Naive thymus-derived CD4-positive, alpha-beta T cell (primary cell): ENCODE measurements at regions of chr10 and their contacts with region 1.

Region 1: DNA sequence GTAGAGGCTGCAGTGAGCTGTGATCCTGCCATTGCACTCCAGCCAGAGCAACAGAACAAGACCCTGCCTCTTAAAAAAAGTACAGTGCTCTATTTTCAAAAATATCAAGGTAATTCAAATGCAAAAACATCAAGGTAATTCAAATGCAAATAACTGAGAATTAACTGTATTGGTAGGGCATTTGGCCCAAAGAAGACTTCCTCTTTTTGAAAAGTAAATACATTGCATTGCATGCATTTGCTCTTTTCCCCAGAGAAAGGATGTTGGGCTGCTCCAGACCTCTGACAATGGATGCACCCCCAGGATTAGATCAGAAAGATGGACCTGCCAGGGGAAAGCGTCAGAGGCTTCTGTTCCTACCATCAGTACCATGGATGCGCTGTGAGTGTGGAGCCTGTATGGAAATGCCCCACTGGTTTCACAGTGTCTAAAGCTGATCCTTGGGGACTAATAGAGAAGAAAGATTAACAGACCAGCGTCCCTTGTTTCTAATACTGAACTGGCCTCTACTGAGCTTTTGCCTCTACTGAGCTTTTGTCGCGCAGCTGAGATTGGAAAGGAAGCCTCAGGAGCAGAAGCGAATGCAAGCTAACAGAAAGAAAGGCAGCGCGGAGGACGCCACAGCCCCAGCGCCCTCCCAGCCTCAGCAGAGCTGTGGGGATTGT is 93.5 kb upstream of the LYZL2 start:
- DNase-seq: no peak
- ATAC-seq: no peak
- H3K4me3 ChIP-seq: no peak overlapping the region
- H3K4me3 Mint-ChIP-seq: no peak overlapping the region
- H3K27ac ChIP-seq: no peak overlapping the region
- H3K27ac Mint-ChIP-seq: no peak overlapping the region
- H3K4me1 ChIP-seq: no peaks in the 10 kb centered on the region
- H3K4me1 Mint-ChIP-seq: peaks cover 0 to 10% (median 0%) of the 10 kb centered on the region in 7 donors
- H3K27me3 ChIP-seq: no peaks in the 10 kb centered on the region
- H3K27me3 Mint-ChIP-seq: peaks cover 0 to 4% (median 0%) of the 10 kb centered on the region in 5 donors

Region 2: DNA sequence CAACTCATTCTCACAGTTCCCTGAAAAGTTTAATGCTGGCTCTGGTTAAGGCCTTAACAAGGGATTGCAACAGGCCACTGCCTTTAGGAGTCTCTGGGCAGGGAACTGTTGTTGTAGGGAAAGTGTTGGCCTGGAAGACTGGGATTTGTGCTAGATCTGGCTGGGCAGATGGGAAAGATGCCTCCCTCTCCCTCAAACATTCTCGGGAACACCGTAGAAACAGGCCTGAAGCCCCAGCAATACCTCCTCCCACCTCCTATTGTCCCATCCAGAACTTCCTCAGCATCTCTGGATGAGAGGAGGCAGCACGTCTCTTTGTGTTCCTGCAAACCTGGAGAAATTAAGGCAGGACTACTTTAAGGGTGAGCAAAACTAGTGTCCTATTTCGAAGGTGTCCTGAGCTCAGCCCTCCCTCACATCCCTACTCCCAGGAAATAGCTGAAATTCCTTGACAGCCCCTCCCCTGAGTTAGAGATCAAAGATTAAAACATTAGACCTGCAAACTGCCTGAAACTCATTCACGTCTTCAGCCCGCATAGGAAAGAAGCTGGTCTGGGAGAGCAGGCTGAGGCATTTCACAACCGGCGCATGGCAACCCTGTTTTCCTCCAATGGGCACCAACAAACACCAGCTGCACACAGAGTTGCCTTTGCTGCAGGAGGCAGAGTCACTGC is 300.0 kb before region 1 on chr10:
- CTCF ChIA-PET with region 1: no interaction called
- POLR2A ChIA-PET with region 1: no interaction called
- intact Hi-C with region 1: no loop called
- DNase-seq: no peak
- ATAC-seq: peak; percentile 60
- H3K4me3 ChIP-seq: no peak overlapping the region
- H3K4me3 Mint-ChIP-seq: no peak overlapping the region
- H3K27ac ChIP-seq: no peak overlapping the region
- H3K27ac Mint-ChIP-seq: no peak overlapping the region
- H3K4me1 ChIP-seq: peaks cover 9 to 15% of the 10 kb centered on the region in 2 donors
- H3K4me1 Mint-ChIP-seq: peaks cover 20 to 55% (median 22%) of the 10 kb centered on the region in 7 donors
- H3K27me3 ChIP-seq: no peaks in the 10 kb centered on the region
- H3K27me3 Mint-ChIP-seq: no peaks in the 10 kb centered on the region

Region 3: DNA sequence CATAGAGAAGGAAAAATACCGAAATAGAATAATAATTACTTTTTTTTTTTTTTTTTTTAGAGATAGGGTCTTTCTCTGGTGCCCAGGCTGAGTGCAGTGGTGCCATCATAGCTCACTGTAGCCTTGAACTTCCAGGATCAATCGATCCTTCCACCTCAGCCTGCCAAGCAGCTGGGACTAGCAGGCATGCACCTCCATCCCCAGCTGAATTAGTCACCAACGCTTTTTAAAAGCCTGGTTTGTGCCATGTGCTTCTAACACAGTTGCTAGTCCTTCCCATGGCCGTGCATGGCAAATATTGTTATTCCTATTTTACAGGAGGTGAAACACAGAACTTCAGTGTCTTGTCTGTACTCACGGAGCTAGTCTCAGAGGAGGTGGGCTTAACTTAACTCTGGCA is 116.8 kb before region 1 on chr10:
- CTCF ChIA-PET with region 1: no interaction called
- POLR2A ChIA-PET with region 1: no interaction called
- intact Hi-C with region 1: no loop called
- DNase-seq: no peak
- ATAC-seq: no peak
- H3K4me3 ChIP-seq: no peak overlapping the region
- H3K4me3 Mint-ChIP-seq: no peak overlapping the region
- H3K27ac ChIP-seq: no peak overlapping the region
- H3K27ac Mint-ChIP-seq: no peak overlapping the region
- H3K4me1 ChIP-seq: no peaks in the 10 kb centered on the region
- H3K4me1 Mint-ChIP-seq: peaks cover 0 to 3% (median 0%) of the 10 kb centered on the region in 7 donors
- H3K27me3 ChIP-seq: no peaks in the 10 kb centered on the region
- H3K27me3 Mint-ChIP-seq: peaks cover 14 to 37% (median 18%) of the 10 kb centered on the region in 5 donors

Region 4: DNA sequence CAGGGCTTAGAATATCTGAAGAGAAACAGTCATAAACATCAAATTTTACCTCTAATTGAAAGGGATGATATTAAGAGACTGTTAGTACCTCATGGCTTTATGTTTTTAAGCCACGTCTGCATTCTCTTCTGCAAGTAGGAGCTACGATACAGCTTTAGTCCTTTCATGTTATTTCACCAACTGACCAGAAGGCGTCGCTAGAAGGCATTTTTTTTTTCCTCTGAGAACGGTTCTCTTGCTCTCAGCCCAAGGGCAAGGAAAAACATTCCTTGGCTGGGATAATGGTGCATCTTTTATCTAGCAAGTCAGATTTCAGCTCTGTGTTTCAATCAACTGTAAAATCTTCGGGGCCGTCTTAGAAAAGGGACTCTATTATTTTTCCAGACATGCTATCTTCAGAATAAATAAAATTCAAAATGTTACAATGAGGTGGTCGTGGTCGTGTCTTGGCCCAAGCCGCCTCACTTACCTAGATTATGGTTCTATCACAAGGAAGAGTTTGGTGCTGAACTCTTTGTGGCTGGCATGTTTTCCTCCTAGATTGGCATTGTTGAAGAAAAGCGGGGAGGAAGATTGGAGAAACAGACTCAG is 52.0 kb before region 1 on chr10:
- CTCF ChIA-PET with region 1: interaction called, 19 read pairs
- POLR2A ChIA-PET with region 1: no interaction called
- intact Hi-C with region 1: loop called (anchors 1 kb)
- DNase-seq: peak in 6 of 9 donors; percentile 15 to 51 (median 40)
- ATAC-seq: peak; percentile 76
- H3K4me3 ChIP-seq: peak overlapping the region; percentile 40
- H3K4me3 Mint-ChIP-seq: peak overlapping the region in 9 of 10 donors; percentile 43 to 80 (median 74)
- H3K27ac ChIP-seq: no peak overlapping the region
- H3K27ac Mint-ChIP-seq: no peak overlapping the region
- H3K4me1 ChIP-seq: no peaks in the 10 kb centered on the region
- H3K4me1 Mint-ChIP-seq: peaks cover 0 to 13% (median 0%) of the 10 kb centered on the region in 7 donors
- H3K27me3 ChIP-seq: no peaks in the 10 kb centered on the region
- H3K27me3 Mint-ChIP-seq: peaks cover 0 to 23% (median 12%) of the 10 kb centered on the region in 5 donors

Region 5: GRCh38 chr10:30701451-30702173 is 21.5 kb before region 1 on chr10:
- CTCF ChIA-PET with region 1: interaction called, 13 read pairs
- POLR2A ChIA-PET with region 1: interaction called, 4 read pairs
- intact Hi-C with region 1: loop called in 1 of 2 experiments (anchors 1 kb)
- DNase-seq: peak in 8 of 9 donors; percentile 68 to 81 (median 74)
- ATAC-seq: peak; percentile 80
- H3K4me3 ChIP-seq: peak overlapping the region; percentile 31
- H3K4me3 Mint-ChIP-seq: peak overlapping the region; percentile 68 to 98 (median 88)
- H3K27ac ChIP-seq: peak overlapping the region; percentile 86
- H3K27ac Mint-ChIP-seq: peak overlapping the region; percentile 88 to 98 (median 96)
- H3K4me1 ChIP-seq: peaks cover 63 to 74% of the 10 kb centered on the region in 2 donors
- H3K4me1 Mint-ChIP-seq: peaks cover 51 to 97% (median 88%) of the 10 kb centered on the region in 7 donors
- H3K27me3 ChIP-seq: no peaks in the 10 kb centered on the region
- H3K27me3 Mint-ChIP-seq: no peaks in the 10 kb centered on the region

Region 6: DNA sequence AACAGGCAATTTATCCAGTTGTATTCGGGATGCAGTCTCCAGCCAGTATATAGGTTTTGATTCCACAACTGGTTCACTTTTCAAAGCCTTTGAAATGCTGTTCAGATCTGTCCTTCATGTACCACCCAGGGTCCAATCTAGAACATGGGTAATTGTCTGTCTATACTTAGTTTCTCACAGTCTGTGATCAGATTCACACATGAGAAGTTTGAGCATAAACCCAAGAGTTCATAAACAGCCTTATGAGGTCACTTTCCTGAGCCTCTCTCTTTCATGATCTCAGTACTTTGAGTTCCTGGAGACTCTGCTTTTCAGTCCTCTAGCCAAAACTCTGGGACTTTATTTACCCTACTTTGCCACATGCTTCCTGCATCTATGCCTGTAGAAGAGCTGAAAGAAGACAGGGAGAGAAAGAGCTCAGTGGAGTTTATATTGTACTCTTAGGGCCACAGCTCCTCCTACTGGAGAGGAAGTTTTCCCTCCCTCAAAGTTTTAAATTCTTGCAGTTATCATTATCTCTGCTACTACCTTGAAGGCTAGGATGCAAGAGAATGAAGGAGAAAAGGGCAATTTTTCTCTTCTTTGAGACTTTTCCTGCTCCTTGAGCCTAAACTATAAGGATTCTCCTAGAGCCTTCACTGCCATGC is 767.9 kb after region 1 on chr10:
- CTCF ChIA-PET with region 1: no interaction called
- POLR2A ChIA-PET with region 1: no interaction called
- intact Hi-C with region 1: loop called (anchors 1 to 2 kb)
- DNase-seq: peak in 6 of 9 donors; percentile 30 to 50 (median 36)
- ATAC-seq: peak; percentile 72
- H3K4me3 ChIP-seq: no peak overlapping the region
- H3K4me3 Mint-ChIP-seq: no peak overlapping the region
- H3K27ac ChIP-seq: no peak overlapping the region
- H3K27ac Mint-ChIP-seq: peak overlapping the region in 1 of 9 donors; percentile 1
- H3K4me1 ChIP-seq: no peaks in the 10 kb centered on the region
- H3K4me1 Mint-ChIP-seq: peaks cover 0 to 12% (median 0%) of the 10 kb centered on the region in 7 donors
- H3K27me3 ChIP-seq: no peaks in the 10 kb centered on the region
- H3K27me3 Mint-ChIP-seq: no peaks in the 10 kb centered on the region

Region 7: GRCh38 chr10:31808258-31809218 is 1085.5 kb after region 1 on chr10:
- CTCF ChIA-PET with region 1: no interaction called
- POLR2A ChIA-PET with region 1: no interaction called
- intact Hi-C with region 1: loop called (anchors 1 kb)
- DNase-seq: peak in 8 of 9 donors; percentile 21 to 62 (median 48)
- ATAC-seq: peak; percentile 77
- H3K4me3 ChIP-seq: no peak overlapping the region
- H3K4me3 Mint-ChIP-seq: peak overlapping the region in 3 of 10 donors; percentile 51 to 78 (median 56)
- H3K27ac ChIP-seq: no peak overlapping the region
- H3K27ac Mint-ChIP-seq: peak overlapping the region in 8 of 9 donors; percentile 17 to 94 (median 71)
- H3K4me1 ChIP-seq: no peaks in the 10 kb centered on the region
- H3K4me1 Mint-ChIP-seq: peaks cover 2 to 11% (median 6%) of the 10 kb centered on the region in 7 donors
- H3K27me3 ChIP-seq: no peaks in the 10 kb centered on the region
- H3K27me3 Mint-ChIP-seq: no peaks in the 10 kb centered on the region

Region 8: GRCh38 chr10:32207544-32207943 is 1484.5 kb after region 1 on chr10:
- CTCF ChIA-PET with region 1: no interaction called
- POLR2A ChIA-PET with region 1: no interaction called
- intact Hi-C with region 1: loop called in 1 of 2 experiments (anchors 2 kb)
- DNase-seq: peak; percentile 18 to 65 (median 40)
- ATAC-seq: peak; percentile 91
- H3K4me3 ChIP-seq: no peak overlapping the region
- H3K4me3 Mint-ChIP-seq: no peak overlapping the region
- H3K27ac ChIP-seq: no peak overlapping the region
- H3K27ac Mint-ChIP-seq: no peak overlapping the region
- H3K4me1 ChIP-seq: no peaks in the 10 kb centered on the region
- H3K4me1 Mint-ChIP-seq: peaks cover 0 to 5% (median 4%) of the 10 kb centered on the region in 7 donors
- H3K27me3 ChIP-seq: no peaks in the 10 kb centered on the region
- H3K27me3 Mint-ChIP-seq: peaks cover 0 to 6% (median 0%) of the 10 kb centered on the region in 5 donors